PC-3 (cell line): ENCODE measurements at regions of chr7 and their contacts with region 1.

Region 1: DNA sequence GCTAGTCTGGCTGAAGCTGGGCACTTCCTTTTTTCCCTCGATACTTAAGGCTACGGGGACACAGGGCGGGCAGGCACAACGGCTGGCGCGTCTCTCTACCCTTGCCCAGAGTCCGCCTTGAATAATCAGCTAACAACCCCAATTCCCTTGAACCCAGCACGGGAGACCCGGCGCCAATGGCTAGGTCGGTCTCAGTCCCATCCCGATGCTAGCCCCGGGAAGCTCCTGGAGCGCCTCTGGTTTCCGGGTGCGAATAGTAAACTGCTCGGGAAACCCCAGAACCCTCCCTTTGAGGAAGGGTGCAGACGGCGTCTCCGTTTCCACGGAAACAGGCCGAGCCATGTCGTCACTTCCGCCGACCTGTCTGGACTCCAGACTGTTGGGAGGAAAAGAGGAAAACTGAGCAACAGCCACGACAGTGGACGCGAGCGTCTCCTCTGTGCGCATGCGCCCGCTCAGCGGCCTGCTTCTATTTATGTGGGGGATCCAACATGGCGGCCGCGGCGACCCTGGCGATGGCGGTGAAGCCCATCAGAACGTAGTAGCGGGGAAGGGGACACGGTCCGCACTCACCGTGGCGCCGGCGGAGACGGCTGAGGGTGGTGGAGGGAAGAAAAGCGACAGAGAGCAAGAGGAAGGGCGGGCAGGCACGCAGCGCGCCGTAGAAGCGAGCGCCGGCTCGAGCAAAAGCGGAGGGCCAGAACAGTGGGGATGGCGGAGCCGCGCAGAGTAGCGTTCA is at the start of gene UBN2:
- DNase-seq: peak; percentile 97
- ATAC-seq: peak; percentile 81
- H3K4me3 ChIP-seq: peak within 1 kb of the TSS; percentile 100
- H3K27ac ChIP-seq: no peak within 1 kb of the TSS
- H3K4me1 ChIP-seq: peaks cover 27% of the 10 kb centered on the region
- H3K27me3 ChIP-seq: no peaks in the 10 kb centered on the region
- CTCF ChIP-seq: no peak
- total RNA-seq, gene UBN2: 2.2 and 3.7 TPM in 2 replicates

Region 2: GRCh38 chr7:138785587-138786437 is 445.1 kb before region 1 on chr7:
- CTCF ChIA-PET with region 1: no interaction called
- POLR2A ChIA-PET with region 1: no interaction called
- intact Hi-C with region 1: no loop called
- DNase-seq: peak; percentile 25
- ATAC-seq: peak; percentile 50; the same call in 1 of the 2 replicates
- H3K4me3 ChIP-seq: no peak overlapping the region
- H3K27ac ChIP-seq: no peak overlapping the region
- H3K4me1 ChIP-seq: no peaks in the 10 kb centered on the region
- H3K27me3 ChIP-seq: no peaks in the 10 kb centered on the region
- CTCF ChIP-seq: no peak

Region 3: DNA sequence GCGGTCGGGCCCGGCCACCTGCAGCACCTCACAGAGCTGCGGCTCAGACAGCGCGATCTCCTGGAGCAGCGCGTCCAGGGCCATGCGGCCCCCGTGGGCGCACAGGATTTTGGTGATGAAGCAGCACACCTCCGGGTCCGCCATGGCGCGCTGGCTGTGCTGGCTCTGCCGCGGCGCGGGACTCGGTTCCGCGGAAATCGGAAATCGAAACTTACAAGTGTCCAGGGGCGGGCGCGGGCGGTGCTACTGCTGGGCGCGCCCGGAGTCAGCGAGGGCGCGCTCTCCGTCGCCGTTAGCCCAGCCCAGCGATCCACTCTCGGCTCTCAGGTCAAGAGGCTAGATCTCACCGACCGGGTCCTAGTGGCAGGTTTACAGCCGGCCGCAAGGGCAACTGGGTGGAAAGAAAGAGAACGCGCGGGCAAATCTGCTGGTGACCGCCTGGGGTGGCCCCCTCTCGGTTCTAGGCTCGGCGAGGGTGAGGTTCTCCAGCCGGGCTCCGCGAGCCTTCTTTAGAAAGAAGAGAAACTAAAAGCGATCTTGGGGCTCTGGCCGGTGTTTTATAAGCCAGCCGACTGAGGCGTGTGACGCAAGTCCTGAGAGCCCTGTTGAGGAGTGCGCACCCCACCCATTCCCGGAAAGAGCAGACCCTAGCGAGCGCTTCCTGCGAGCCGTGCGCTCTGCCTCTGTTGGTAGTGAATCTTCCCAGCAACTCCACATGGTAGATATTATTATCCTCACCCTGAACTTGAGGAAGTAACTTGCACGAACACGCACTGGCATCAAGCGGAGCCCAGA is 121.6 kb before region 1 on chr7 and contains the start of gene ZC3HAV1:
- CTCF ChIA-PET with region 1: no interaction called
- POLR2A ChIA-PET with region 1: no interaction called
- intact Hi-C with region 1: loop called (anchors 1 kb)
- DNase-seq: peak; percentile 71
- ATAC-seq: peak; percentile 81
- H3K4me3 ChIP-seq: peak within 1 kb of the TSS; percentile 96
- H3K27ac ChIP-seq: peak within 1 kb of the TSS; percentile 66
- H3K4me1 ChIP-seq: peaks cover 31% of the 10 kb centered on the region
- H3K27me3 ChIP-seq: no peaks in the 10 kb centered on the region
- CTCF ChIP-seq: no peak
- total RNA-seq, gene ZC3HAV1: 19.6 and 25.0 TPM in 2 replicates

Region 4: DNA sequence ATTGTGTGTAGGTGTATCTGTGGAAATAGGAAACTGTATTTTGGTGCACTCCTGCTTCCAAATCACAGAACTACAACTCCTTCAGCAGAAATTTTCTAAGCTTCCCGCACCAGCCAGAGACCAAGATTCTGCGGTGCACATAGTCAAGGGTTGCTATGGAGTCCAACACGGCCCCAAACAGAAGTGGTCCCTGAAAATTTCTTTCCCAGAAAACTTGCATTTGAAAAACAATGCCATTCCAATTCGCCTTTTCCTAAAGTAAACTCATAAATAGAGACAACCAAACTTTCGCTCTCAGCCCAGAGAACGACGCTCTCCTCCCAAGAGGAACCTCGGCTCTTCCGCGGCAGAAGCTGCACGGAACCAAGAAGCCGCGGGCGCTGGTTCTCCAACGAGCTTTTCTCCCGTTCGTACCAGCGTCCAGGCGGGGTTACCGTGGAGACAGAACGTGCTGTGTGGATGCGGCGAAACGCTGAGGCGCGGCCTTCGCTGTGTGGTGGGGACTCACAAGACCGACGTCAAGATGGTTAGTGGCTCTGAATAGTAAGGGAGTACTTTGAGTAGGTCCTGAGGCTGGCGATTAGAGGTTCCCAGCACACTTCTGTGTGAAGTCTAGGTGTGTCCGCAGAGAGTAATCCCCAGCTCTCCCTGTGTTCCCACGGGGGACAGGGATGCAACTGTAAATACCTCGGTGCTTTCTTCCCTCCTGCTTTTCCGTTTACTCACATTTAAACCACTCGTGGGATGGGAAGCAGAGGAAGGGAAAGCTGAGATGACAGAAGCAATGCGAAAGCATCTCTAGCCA is 97.4 kb before region 1 on chr7:
- CTCF ChIA-PET with region 1: no interaction called
- POLR2A ChIA-PET with region 1: interaction called, 6 read pairs
- intact Hi-C with region 1: loop called (anchors 1 kb)
- DNase-seq: peak; percentile 89
- ATAC-seq: peak; percentile 98
- H3K4me3 ChIP-seq: peak overlapping the region; percentile 79
- H3K27ac ChIP-seq: no peak overlapping the region
- H3K4me1 ChIP-seq: peaks cover 4% of the 10 kb centered on the region; the same call in 1 of the 2 replicates
- H3K27me3 ChIP-seq: no peaks in the 10 kb centered on the region
- CTCF ChIP-seq: no peak

Region 5: DNA sequence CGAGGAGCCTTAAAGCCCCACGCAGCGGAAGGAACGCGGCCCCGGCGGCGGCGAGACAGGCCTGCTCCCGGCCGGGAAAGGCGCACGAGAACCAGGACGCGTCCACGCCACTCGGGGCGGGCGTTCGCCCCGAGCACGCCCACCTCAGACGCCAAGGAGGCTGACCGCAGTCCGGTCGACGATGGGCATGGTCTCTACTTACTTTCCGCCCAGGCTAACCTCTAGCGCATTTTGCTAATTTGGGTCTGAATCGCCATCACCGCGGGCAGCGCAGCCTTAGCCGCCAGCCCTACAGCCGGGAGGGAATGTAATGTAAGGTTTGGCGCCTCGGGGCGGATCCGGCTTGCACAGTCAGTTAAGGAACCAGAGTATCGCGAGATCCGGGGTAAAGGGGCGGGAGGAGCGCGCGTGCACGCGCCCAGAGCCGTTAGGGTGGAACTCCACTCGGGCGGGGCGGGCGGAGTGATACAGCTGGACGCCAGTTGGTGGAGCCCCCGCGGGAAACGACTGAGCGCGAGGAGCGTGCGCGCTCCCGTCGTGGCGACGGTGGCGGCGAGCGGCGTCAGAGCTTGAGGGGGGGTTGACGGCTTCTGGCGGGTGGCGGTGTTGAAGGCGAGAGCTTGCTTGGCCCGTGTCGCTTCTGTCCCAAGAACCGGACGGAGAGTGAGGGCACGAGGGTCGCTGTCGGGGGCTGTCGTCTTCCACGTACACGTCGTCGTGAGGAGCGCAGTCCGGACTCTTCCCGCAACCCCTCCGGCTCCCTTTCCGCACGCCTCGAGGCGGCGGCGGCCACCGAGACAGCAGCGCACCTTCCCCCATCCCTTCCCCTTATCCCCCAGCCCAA is 128.6 kb after region 1 on chr7 and contains the start of gene LUC7L2:
- CTCF ChIA-PET with region 1: no interaction called
- POLR2A ChIA-PET with region 1: no interaction called
- intact Hi-C with region 1: loop called (anchors 10 kb)
- DNase-seq: peak; percentile 98
- ATAC-seq: peak; percentile 77
- H3K4me3 ChIP-seq: peak within 1 kb of the TSS; percentile 91
- H3K27ac ChIP-seq: peak within 1 kb of the TSS; percentile 88
- H3K4me1 ChIP-seq: peaks cover 14% of the 10 kb centered on the region; the same call in 1 of the 2 replicates
- H3K27me3 ChIP-seq: no peaks in the 10 kb centered on the region
- CTCF ChIP-seq: no peak
- total RNA-seq, gene LUC7L2: 67.4 and 110 TPM in 2 replicates

Region 6: DNA sequence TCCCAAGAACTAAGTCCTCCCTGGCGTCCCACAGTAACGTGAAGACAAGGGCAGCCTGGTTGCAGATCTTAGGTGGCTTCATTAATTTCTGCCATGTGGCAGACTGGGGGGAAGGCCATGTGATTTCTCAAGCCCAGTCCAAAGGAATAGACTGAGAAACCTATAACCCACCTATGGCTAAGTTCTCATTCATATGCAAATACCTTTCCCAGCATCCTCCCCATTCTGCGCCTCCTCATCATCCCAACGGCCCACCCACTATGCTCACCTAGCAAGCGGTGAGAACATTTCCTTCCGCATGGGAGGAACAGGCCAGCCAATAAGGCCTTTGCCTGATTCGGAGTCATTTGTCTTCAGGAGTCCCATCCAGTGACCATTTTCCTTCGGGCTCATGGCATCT is 284.3 kb after region 1 on chr7:
- CTCF ChIA-PET with region 1: no interaction called
- POLR2A ChIA-PET with region 1: no interaction called
- intact Hi-C with region 1: no loop called
- DNase-seq: no peak
- ATAC-seq: no peak
- H3K4me3 ChIP-seq: no peak overlapping the region
- H3K27ac ChIP-seq: no peak overlapping the region
- H3K4me1 ChIP-seq: no peaks in the 10 kb centered on the region
- H3K27me3 ChIP-seq: no peaks in the 10 kb centered on the region
- CTCF ChIP-seq: no peak